ENCODE measurements at regions of chr19 and their contacts with region 1.

Region 1: GRCh38 chr19:45478454-45479238 is 10.8 kb downstream of the FOSB start:
- DNase-seq: peak; percentile 69
- H3K27ac ChIP-seq: peak overlapping the region; percentile 87
- CTCF ChIP-seq: peak; percentile 86

Region 2: GRCh38 chr19:45403781-45404556 is 74.7 kb before region 1 on chr19:
- CTCF ChIA-PET with region 1: interaction called, 19 read pairs
- POLR2A ChIA-PET with region 1: no interaction called
- DNase-seq: peak; percentile 68
- H3K27ac ChIP-seq: peak overlapping the region; percentile 98
- CTCF ChIP-seq: peak; percentile 74

Region 3: DNA sequence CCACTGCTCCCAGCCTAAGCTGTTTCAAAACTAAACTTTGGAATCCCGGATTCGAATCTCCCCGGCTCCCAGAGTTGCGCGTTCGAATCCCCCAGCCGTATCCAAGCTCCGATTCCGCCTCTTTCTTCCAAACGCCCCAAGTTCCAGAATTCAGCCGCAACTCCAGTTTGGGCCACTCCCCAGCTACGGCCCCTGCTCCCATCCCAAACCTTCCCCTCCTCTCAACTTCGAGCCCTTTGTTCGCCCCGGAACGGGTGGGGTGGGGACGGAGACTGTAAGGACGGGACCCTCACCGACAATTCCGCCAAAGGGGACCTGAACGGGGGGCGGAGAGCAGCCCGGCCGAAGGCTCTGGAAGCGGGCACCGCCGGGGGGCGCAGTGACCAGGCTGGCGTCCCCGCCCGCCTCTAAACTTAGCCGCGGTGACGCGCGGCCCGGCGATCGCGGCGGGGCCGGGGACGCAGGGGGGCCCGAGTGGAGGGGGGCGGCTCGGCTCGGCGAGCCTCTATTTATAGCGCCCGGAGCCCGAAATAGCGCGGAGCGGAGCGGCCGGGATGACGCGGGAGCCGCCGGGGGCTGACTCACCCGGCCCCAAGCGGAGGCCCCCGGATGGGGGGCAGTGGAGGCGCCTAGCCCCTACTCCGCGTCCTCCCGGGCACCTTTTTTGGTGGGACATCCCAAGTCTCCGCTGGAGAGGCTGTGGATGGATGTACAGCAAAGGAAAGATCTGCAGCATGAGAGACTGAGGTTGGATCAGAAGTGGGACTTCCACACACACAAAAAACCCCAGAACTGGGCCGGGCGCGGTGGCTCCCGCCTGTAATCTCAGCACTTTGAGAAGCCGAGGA is 50.0 kb before region 1 on chr19:
- CTCF ChIA-PET with region 1: interaction called, 15 read pairs
- POLR2A ChIA-PET with region 1: interaction called, 8 read pairs
- DNase-seq: no peak
- H3K27ac ChIP-seq: peak overlapping the region; percentile 100
- CTCF ChIP-seq: peak; percentile 54

Region 4: DNA sequence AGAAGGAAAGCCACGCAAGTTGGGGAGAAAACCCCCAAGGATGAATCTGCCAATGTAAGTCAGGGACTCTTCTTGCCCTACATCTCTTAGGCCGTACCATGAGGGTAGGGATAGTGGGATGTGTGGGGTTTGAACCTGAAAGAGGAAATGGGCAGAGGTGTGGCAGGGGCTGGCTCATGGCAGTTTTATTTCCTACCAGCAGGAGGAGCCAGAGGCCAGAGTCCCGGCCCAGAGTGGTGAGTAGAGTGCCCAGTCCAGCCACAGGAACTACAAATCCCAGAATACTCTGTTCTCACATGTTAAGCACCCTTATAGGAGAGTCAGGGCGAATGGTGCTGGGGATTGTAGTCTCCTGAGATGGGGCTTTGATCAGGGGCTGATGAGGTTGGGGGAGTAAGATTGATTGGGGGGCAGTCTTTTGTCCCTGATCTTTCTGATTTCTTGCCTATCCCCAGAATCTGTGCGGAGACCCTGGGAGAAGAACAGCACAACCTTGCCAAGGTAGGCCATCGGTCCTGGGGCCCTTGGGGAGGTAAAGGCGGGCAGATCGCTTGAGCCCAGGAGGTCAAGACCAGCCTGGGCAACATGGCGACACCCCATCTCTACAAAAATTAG is 45.1 kb after region 1 on chr19:
- CTCF ChIA-PET with region 1: no interaction called
- POLR2A ChIA-PET with region 1: no interaction called
- DNase-seq: peak; percentile 75
- H3K27ac ChIP-seq: peak overlapping the region; percentile 92
- CTCF ChIP-seq: peak; percentile 94

Region 5: GRCh38 chr19:45558399-45558878 is 79.8 kb after region 1 on chr19:
- CTCF ChIA-PET with region 1: no interaction called
- POLR2A ChIA-PET with region 1: no interaction called
- DNase-seq: peak; percentile 49
- H3K27ac ChIP-seq: peak overlapping the region; percentile 43; the same call in 1 of the 2 replicates
- CTCF ChIP-seq: peak; percentile 68

Region 6: GRCh38 chr19:47124937-47125668 is 1646.5 kb after region 1 on chr19:
- CTCF ChIA-PET with region 1: no interaction called
- POLR2A ChIA-PET with region 1: no interaction called
- DNase-seq: peak; percentile 55
- H3K27ac ChIP-seq: no peak overlapping the region
- CTCF ChIP-seq: peak; percentile 69

Measured in RWPE1 (cell line).